Activated T-helper 2 cell treated with anti-CD3 and anti-CD28 coated beads, Interferon-gamma antibody, Interleukin-2, Interleukin-4, amounts not matched to agents 10 μg/mL and 5 μg/mL and 100 μg/mL, durations not matched to agents 14 hours and 24 hours and 36 hours (primary cell): ENCODE measurements at regions of chr12 and their contacts with region 1.

Region 1: GRCh38 chr12:48105862-48106680 is at the start of gene SENP1:
- DNase-seq: peak; percentile 86
- H3K4me3 Mint-ChIP-seq: peak within 1 kb of the TSS; percentile 99
- H3K27ac Mint-ChIP-seq: peak within 1 kb of the TSS; percentile 97
- H3K4me1 Mint-ChIP-seq: peaks cover 40% of the 10 kb centered on the region
- H3K27me3 Mint-ChIP-seq: peaks cover 5% of the 10 kb centered on the region
- total RNA-seq, gene SENP1: 45.9 and 49.0 TPM in 2 replicates

Region 2: GRCh38 chr12:48119078-48119833 is 13.2 kb after region 1 on chr12 and contains the start of gene PFKM:
- intact Hi-C with region 1: loop called (anchors 1 kb)
- DNase-seq: peak; percentile 69
- H3K4me3 Mint-ChIP-seq: peak within 1 kb of the TSS; percentile 96
- H3K27ac Mint-ChIP-seq: peak within 1 kb of the TSS; percentile 74
- H3K4me1 Mint-ChIP-seq: peaks cover 20% of the 10 kb centered on the region
- H3K27me3 Mint-ChIP-seq: peaks cover 18% of the 10 kb centered on the region
- total RNA-seq, gene PFKM: 55.2 and 67.3 TPM in 2 replicates

Region 3: GRCh38 chr12:48165094-48165981 is 59.3 kb after region 1 on chr12:
- intact Hi-C with region 1: loop called (anchors 2 kb)
- DNase-seq: no peak
- H3K4me3 Mint-ChIP-seq: no peak overlapping the region
- H3K27ac Mint-ChIP-seq: no peak overlapping the region
- H3K4me1 Mint-ChIP-seq: peaks cover 2% of the 10 kb centered on the region
- H3K27me3 Mint-ChIP-seq: peaks cover 16% of the 10 kb centered on the region

Region 4: GRCh38 chr12:48183091-48183875 is 77.2 kb after region 1 on chr12 and contains the start of gene CCDC184:
- intact Hi-C with region 1: loop called (anchors 5 kb)
- DNase-seq: peak; percentile 72
- H3K4me3 Mint-ChIP-seq: peak within 1 kb of the TSS; percentile 84
- H3K27ac Mint-ChIP-seq: no peak within 1 kb of the TSS
- H3K4me1 Mint-ChIP-seq: peaks cover 18% of the 10 kb centered on the region
- H3K27me3 Mint-ChIP-seq: peaks cover 61% of the 10 kb centered on the region
- total RNA-seq, gene CCDC184: 0.34 and 0.64 TPM in 2 replicates

Region 5: GRCh38 chr12:48424644-48425043 is 318.6 kb after region 1 on chr12:
- intact Hi-C with region 1: no loop called
- DNase-seq: no peak
- H3K4me3 Mint-ChIP-seq: no peak overlapping the region
- H3K27ac Mint-ChIP-seq: no peak overlapping the region
- H3K4me1 Mint-ChIP-seq: peaks cover 2% of the 10 kb centered on the region
- H3K27me3 Mint-ChIP-seq: peaks cover 1% of the 10 kb centered on the region

Region 6: GRCh38 chr12:48681738-48682532 is 575.9 kb after region 1 on chr12 and contains the start of gene KANSL2:
- intact Hi-C with region 1: loop called (anchors 5 kb)
- DNase-seq: peak; percentile 98
- H3K4me3 Mint-ChIP-seq: peak within 1 kb of the TSS; percentile 99
- H3K27ac Mint-ChIP-seq: peak within 1 kb of the TSS; percentile 94
- H3K4me1 Mint-ChIP-seq: peaks cover 38% of the 10 kb centered on the region
- H3K27me3 Mint-ChIP-seq: no peaks in the 10 kb centered on the region
- total RNA-seq, gene KANSL2: 59.5 and 62.7 TPM in 2 replicates

Region 7: DNA sequence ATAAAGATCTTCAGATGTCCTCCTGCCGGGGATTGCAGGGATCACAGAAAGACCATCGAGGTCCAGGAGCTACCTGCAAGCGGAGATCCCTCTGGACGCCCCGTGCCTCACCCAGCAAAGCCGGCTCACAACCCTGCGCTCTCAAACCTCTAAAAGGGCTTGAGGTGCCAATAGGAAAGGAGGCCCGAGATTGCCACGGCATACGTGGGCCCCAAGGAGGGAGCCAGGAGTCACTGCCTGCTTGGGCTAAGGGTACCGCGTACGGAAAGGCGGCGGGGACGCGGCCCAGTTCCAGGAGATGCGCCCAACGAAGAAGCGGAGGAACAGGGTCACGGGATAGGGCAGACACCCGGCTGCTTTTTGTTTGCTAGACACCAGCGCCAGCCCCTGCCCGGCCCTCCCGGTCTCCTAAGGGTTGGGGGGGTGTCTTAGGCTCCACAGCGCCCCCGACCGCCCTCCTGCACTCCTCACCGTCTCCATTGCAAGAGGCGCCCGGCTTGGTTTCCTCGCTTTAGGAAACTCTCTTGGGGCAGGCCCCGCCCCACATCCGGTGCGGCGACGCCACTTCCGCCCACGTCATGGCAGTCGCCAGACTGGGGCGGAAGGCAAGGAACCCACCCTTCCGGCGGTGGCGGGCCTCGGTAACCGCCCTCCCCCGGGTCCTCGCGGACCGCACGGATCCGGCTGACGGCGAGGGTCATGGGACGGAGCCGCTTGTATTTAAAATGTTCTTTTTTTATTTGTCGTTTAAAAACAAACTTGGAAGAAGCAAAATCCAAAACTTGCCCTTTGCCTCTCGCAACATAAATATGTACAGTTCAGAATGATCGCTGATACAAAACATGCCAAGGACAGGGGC is 912.4 kb after region 1 on chr12 and contains the start of gene PRKAG1:
- intact Hi-C with region 1: no loop called
- DNase-seq: peak; percentile 96
- H3K4me3 Mint-ChIP-seq: peak within 1 kb of the TSS; percentile 90
- H3K27ac Mint-ChIP-seq: peak within 1 kb of the TSS; percentile 93
- H3K4me1 Mint-ChIP-seq: peaks cover 25% of the 10 kb centered on the region
- H3K27me3 Mint-ChIP-seq: no peaks in the 10 kb centered on the region
- total RNA-seq, gene PRKAG1: 65.1 and 65.7 TPM in 2 replicates